Vagina (tissue), 2 donors: ENCODE measurements at regions of chr4 and their contacts with region 1.

Region 1: GRCh38 chr4:17708992-17709762 is 72.2 kb downstream of the FAM184B start:
- DNase-seq: peak in 1 of 2 donors; percentile 85
- H3K4me3 ChIP-seq: no peak overlapping the region
- H3K27ac ChIP-seq: no peak overlapping the region
- H3K4me1 ChIP-seq: no peaks in the 10 kb centered on the region
- H3K27me3 ChIP-seq: no peaks in the 10 kb centered on the region
- CTCF ChIP-seq: no peak
- POLR2A ChIP-seq: no peak

Region 2: DNA sequence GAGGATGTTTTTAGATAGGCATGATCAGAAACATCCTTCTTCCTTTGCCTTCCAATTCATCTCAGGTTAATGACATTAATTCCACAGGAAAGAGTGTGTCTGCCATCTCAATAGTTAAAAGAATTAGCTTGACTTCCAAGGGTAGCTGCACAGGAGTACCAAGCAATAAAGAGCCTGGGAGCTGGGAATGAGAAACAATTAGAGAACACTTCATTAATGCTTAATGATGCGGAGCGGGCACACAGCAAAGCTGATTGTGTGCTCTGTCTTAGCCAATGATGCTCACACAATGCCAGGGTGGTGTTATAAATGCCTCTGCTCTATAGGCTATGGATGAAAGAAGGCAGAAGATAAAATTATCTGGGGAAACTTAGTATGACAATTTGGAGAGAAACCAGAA is 1364.9 kb after region 1 on chr4:
- intact Hi-C with region 1: loop called (anchors 5 kb)
- DNase-seq: no peak
- H3K4me3 ChIP-seq: no peak overlapping the region
- H3K27ac ChIP-seq: no peak overlapping the region
- H3K4me1 ChIP-seq: no peaks in the 10 kb centered on the region
- H3K27me3 ChIP-seq: no peaks in the 10 kb centered on the region
- CTCF ChIP-seq: no peak
- POLR2A ChIP-seq: no peak